Activated T-helper 2 cell treated with anti-CD3 and anti-CD28 coated beads, Interferon-gamma antibody, Interleukin-2, Interleukin-4, amounts not matched to agents 10 μg/mL and 5 μg/mL and 100 μg/mL, durations not matched to agents 14 hours and 24 hours and 36 hours (primary cell): ENCODE measurements at regions of chr12 and their contacts with region 1.

Region 1: DNA sequence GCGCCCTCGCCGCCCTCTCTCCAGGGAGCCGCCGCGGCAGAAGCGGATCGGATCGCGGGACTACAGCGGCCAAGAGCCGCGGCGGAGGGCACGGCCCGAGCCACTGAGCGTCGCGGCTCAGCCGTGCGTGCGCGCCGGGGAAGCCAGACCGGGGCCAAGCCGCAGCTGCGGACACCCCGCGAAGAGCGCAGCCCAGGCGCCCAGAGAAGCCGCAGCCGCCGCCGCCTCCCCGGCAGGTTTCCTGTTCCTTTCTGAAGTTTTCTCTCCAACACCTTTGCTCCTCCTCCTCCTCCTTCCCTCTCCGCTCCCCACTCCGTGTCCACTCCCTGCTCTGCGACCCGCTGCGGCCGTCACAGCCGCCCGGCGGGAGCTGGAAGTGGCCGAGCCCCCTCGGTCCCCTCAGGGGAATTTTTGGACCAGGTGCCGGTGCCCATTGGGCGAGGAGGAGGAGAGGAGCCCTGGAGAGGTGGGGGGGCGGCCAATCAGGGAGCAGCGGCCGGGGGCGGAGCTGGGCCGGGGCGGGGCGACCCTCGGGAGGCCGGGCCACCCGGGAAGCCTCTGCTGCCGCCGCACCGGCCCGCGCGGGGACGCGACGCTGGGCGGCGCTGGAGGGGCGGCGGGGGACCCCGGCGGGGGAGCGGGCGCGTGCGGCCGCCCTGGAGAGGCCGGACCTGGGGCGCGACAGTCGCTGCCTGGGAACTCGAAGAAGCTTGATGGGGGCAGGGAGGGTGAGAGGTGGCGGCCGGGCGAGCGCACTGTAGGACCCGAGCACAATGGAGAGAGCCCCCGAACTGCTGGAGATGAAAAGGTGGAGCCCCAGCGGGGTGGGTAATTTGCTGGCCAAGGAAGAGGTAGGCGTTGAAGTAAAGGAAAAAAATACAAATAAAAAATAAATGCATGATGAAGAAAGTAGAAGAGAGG is at the start of gene ITPR2:
- DNase-seq: peak; percentile 88
- H3K4me3 Mint-ChIP-seq: peak within 1 kb of the TSS; percentile 95
- H3K27ac Mint-ChIP-seq: peak within 1 kb of the TSS; percentile 98
- H3K4me1 Mint-ChIP-seq: peaks cover 46% of the 10 kb centered on the region
- H3K27me3 Mint-ChIP-seq: no peaks in the 10 kb centered on the region
- total RNA-seq, gene ITPR2: 49.3 and 49.6 TPM in 2 replicates

Region 2: GRCh38 chr12:26732005-26732908 is 100.8 kb before region 1 on chr12:
- intact Hi-C with region 1: loop called (anchors 5 kb)
- DNase-seq: no peak
- H3K4me3 Mint-ChIP-seq: no peak overlapping the region
- H3K27ac Mint-ChIP-seq: no peak overlapping the region
- H3K4me1 Mint-ChIP-seq: peaks cover 50% of the 10 kb centered on the region
- H3K27me3 Mint-ChIP-seq: no peaks in the 10 kb centered on the region

Region 3: GRCh38 chr12:26884765-26885576 is 51.9 kb after region 1 on chr12:
- intact Hi-C with region 1: loop called (anchors 10 kb)
- DNase-seq: peak; percentile 78
- H3K4me3 Mint-ChIP-seq: no peak overlapping the region
- H3K27ac Mint-ChIP-seq: no peak overlapping the region
- H3K4me1 Mint-ChIP-seq: peaks cover 16% of the 10 kb centered on the region
- H3K27me3 Mint-ChIP-seq: peaks cover 11% of the 10 kb centered on the region